ENCODE measurements at regions of chr14 and their contacts with region 1.

Region 1: DNA sequence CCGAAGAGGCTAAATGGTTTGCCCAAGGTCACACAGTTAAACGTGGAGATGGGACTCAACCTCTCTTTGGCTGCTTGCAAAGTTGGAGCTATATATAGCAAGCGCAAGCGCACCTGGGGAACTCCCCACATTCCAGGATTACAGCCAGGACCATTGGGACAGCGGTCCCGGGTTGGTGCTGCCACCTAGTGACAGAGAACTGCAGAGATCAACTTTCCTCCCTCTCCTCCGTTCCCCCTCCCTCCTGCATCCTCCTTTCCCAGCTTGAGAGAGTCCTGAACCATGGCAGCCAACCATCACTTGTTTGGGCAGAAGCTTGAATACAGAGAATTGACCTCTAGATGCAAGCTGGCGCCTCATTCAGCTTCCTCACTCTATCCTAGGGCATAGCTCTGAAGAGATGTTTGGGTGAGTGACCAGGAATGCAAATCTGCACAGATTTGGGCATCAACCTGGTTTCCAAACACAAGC is 17.4 kb upstream of the FLVCR2 start:
- DNase-seq: peak; percentile 93
- H3K4me3 Mint-ChIP-seq: no peak overlapping the region
- H3K27ac Mint-ChIP-seq: no peak overlapping the region
- H3K4me1 Mint-ChIP-seq: peaks cover 26% of the 10 kb centered on the region
- H3K27me3 Mint-ChIP-seq: no peaks in the 10 kb centered on the region
- CTCF ChIP-seq: peak; percentile 78

Region 2: GRCh38 chr14:75132382-75133086 is 428.5 kb before region 1 on chr14:
- CTCF ChIA-PET with region 1: interaction called, 17 read pairs
- POLR2A ChIA-PET with region 1: interaction called, 8 read pairs
- intact Hi-C with region 1: loop called (anchors 2 kb)
- DNase-seq: peak; percentile 83
- H3K4me3 Mint-ChIP-seq: no peak overlapping the region
- H3K27ac Mint-ChIP-seq: peak overlapping the region; percentile 77
- H3K4me1 Mint-ChIP-seq: peaks cover 33% of the 10 kb centered on the region
- H3K27me3 Mint-ChIP-seq: no peaks in the 10 kb centered on the region
- CTCF ChIP-seq: peak; percentile 67

Region 3: GRCh38 chr14:75418849-75419768 is 141.9 kb before region 1 on chr14:
- CTCF ChIA-PET with region 1: interaction called, 14 read pairs
- POLR2A ChIA-PET with region 1: interaction called, 4 read pairs
- intact Hi-C with region 1: no loop called
- DNase-seq: peak; percentile 46
- H3K4me3 Mint-ChIP-seq: peak overlapping the region; percentile 0
- H3K27ac Mint-ChIP-seq: peak overlapping the region; percentile 6
- H3K4me1 Mint-ChIP-seq: peaks cover 30% of the 10 kb centered on the region
- H3K27me3 Mint-ChIP-seq: no peaks in the 10 kb centered on the region
- CTCF ChIP-seq: no peak

Region 4: GRCh38 chr14:75487155-75487671 is 73.8 kb before region 1 on chr14:
- CTCF ChIA-PET with region 1: interaction called, 92 read pairs
- POLR2A ChIA-PET with region 1: interaction called, 19 read pairs
- intact Hi-C with region 1: loop called (anchors 1 kb)
- DNase-seq: peak; percentile 72
- H3K4me3 Mint-ChIP-seq: no peak overlapping the region
- H3K27ac Mint-ChIP-seq: no peak overlapping the region
- H3K4me1 Mint-ChIP-seq: peaks cover 23% of the 10 kb centered on the region
- H3K27me3 Mint-ChIP-seq: no peaks in the 10 kb centered on the region
- CTCF ChIP-seq: no peak

Region 5: DNA sequence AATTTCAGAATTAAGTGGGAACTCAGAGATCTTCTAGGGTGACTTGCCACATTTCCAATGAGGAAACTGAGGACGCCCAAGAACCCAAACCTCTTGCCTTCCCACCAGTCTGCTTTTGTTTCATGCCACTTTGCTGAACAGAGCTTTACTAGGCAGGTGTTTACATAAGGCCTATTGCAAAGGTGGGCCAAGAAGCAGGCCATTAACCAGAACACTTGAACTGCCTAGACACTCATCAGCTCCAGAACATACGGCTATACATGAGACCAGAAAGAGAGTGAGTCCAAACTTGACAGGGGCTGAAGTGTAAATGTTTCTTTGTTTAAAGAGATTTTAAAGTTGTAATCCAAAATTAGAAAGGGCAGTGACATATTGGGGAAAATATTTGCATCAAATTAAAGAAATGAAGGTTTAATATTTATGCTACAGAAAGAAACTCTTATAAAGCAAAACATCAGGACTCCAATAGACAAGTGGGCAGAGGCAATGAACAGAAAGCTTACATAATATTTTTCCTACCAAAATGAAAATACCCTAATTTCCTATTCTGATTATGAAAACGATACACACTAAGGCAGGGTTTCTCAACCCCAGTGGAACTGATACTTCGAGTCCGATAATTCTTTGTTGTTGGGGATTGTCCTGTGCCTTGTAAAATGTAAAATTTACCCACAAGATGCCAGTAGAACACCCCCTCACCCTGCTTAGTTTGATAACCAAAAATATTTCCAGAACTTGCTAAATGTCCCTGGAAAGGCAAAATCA is 27.0 kb before region 1 on chr14:
- CTCF ChIA-PET with region 1: interaction called, 11 read pairs
- POLR2A ChIA-PET with region 1: interaction called, 17 read pairs
- intact Hi-C with region 1: loop called (anchors 1 kb)
- DNase-seq: no peak
- H3K4me3 Mint-ChIP-seq: no peak overlapping the region
- H3K27ac Mint-ChIP-seq: peak overlapping the region; percentile 98
- H3K4me1 Mint-ChIP-seq: peaks cover 41% of the 10 kb centered on the region
- H3K27me3 Mint-ChIP-seq: no peaks in the 10 kb centered on the region
- CTCF ChIP-seq: no peak

Region 6: DNA sequence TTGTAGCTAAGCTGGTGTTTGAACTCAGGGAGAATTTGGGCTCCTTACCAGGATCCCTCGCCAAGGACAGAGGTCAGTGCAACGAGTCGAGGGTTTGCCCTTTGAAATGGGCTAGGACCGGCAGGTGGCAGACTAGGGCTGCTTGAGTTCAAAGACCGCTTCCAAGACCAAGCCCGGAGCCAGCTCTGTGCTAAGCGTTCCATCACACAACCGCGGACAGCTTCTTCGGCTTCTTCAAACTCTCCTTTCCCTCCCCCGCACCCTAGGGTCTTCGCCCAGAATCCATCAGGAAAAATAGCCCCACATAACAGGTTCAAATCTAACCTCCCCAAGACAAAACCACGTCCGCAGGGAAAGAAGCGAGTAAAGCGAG is 16.7 kb after region 1 on chr14:
- CTCF ChIA-PET with region 1: interaction called, 49 read pairs
- POLR2A ChIA-PET with region 1: interaction called, 17 read pairs
- intact Hi-C with region 1: no loop called
- DNase-seq: peak; percentile 90
- H3K4me3 Mint-ChIP-seq: no peak overlapping the region
- H3K27ac Mint-ChIP-seq: peak overlapping the region; percentile 11
- H3K4me1 Mint-ChIP-seq: no peaks in the 10 kb centered on the region
- H3K27me3 Mint-ChIP-seq: peaks cover 14% of the 10 kb centered on the region
- CTCF ChIP-seq: peak; percentile 80

Measured in MCF 10A (cell line).